Activated T-helper 1 cell treated with anti-CD3 and anti-CD28 coated beads, Interleukin-12 subunit alpha, Interleukin-12 subunit beta, Interleukin-2, Interleukin-4 antibody, amounts not matched to agents 30 ng/mL and 10 ng/mL and 1 ng/mL, durations not matched to agents 14 hours and 24 hours and 36 hours (primary cell): ENCODE measurements at regions of chr1 and their contacts with region 1.

Region 1: DNA sequence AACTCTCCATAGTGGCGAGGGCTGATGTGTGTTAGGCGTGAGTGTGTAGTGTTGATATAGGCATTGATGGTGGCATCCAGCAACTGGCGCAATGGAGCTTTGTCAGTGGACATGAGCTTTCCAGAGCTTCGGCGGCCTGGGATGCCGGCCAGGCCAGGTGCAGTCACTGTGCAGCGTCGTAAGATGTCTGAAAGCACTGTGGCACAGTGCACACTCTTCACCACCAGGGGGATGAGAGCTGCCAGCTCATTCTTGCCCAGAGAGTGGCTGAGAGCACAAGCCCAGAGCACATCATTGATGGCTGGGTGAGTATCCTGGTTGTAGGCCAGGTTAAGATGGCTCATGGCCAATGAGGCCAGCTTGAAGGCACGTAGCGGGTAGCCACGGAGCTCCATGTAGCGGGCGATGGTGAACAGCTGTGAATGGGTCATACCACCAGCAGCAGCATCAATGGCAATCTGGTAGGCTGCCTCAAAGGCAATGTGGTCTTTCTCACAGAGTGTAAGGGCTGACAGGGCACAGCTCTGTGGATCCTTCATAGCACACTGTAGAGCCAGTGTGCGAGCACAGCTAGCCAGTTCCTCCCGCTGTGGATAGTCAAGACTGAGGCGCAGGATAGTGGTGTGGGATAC is 6.7 kb downstream of the UROD start:
- DNase-seq: peak; percentile 46
- H3K4me3 Mint-ChIP-seq: no peak overlapping the region
- H3K27ac Mint-ChIP-seq: no peak overlapping the region
- H3K4me1 Mint-ChIP-seq: peaks cover 17% of the 10 kb centered on the region
- H3K27me3 Mint-ChIP-seq: peaks cover 2% of the 10 kb centered on the region

Region 2: GRCh38 chr1:45001011-45001481 is 17.7 kb before region 1 on chr1:
- intact Hi-C with region 1: no loop called
- DNase-seq: no peak
- H3K4me3 Mint-ChIP-seq: no peak overlapping the region
- H3K27ac Mint-ChIP-seq: peak overlapping the region; percentile 1
- H3K4me1 Mint-ChIP-seq: peaks cover 11% of the 10 kb centered on the region
- H3K27me3 Mint-ChIP-seq: no peaks in the 10 kb centered on the region

Region 3: DNA sequence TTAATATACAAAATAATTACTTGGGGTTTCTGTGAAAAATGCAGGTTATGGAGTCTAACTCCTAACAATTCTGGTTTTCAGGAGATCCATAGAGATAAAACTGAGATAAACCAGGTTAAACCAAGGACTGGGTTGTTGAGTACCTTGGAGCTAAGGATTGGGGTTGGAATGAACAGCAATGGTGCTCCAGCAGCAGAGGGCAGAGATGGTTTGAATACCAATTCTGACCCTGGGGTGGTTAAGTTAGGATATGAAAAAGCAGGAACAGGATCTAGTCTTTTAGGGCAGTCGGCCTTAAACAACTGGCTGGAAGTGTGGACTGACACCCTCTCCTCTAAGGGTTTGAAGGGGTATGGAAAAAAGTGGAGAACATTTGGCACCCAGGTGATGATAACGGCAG is 46.4 kb after region 1 on chr1:
- intact Hi-C with region 1: loop called (anchors 5 kb)
- DNase-seq: no peak
- H3K4me3 Mint-ChIP-seq: no peak overlapping the region
- H3K27ac Mint-ChIP-seq: no peak overlapping the region
- H3K4me1 Mint-ChIP-seq: no peaks in the 10 kb centered on the region
- H3K27me3 Mint-ChIP-seq: peaks cover 2% of the 10 kb centered on the region